Sigmoid colon (tissue), 7 donors: ENCODE measurements at regions of chr16 and their contacts with region 1.

Region 1: DNA sequence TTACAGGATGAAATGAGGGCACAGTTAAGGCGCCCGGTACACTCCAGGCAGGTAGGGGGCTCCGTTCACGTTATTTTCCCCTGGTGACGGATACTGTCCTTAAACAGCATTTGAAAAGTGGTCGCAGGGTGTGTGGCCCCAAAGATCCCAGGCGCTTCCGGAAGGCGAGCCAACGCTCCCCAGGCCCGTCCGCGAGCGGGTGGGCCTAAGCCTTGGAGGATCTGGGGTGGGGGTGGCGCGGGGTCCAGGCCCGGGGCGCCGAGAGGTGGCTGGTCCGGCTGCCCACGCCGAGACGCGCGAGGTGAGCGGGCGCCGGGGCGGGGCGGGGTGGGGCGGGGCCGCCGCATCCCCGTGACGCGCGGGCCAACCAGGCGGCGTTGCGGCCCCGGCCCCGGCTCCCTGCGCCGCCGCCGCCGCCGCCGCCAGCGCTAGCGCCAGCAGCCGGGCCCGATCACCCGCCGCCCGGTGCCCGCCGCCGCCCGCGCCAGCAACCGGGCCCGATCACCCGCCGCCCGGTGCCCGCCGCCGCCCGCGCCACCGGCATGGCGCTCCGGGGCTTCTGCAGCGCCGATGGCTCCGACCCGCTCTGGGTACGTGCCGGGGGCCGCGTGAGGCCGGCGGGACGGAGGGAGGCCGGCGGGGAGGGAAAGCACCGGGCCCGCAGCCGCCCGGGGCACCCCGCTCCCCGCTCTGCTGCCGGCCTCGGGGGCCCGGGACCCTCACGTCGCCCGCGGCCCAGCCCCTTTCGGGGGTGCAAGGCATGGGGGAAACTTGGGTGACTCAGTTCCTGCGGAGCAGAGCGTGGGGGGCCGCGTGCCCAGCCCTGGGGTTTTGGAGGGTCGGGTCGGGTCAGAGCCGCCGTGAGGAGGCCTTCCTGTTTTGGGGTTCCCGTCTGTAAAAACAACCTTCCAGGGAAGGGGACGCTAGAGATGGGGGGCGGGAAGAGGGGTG is at the start of gene ABCC1:
- DNase-seq: no peak
- H3K4me3 ChIP-seq: peak within 1 kb of the TSS; percentile 84 to 97 (median 92)
- H3K27ac ChIP-seq: peak within 1 kb of the TSS; percentile 89 to 94 (median 93)
- H3K4me1 ChIP-seq: peaks cover 0 to 56% (median 50%) of the 10 kb centered on the region in 4 donors
- H3K27me3 ChIP-seq: no peaks in the 10 kb centered on the region
- CTCF ChIP-seq: no peak
- EP300 ChIP-seq: no peak
- POLR2A ChIP-seq: no peak
- total RNA-seq, gene ABCC1: 22.5 to 51.8 (median 32.5) TPM

Region 2: GRCh38 chr16:15829460-15829859 is 120.0 kb before region 1 on chr16:
- intact Hi-C with region 1: no loop called
- DNase-seq: peak; percentile 97
- H3K4me3 ChIP-seq: peak overlapping the region in 3 of 4 donors; percentile 0 to 22 (median 11)
- H3K27ac ChIP-seq: peak overlapping the region; percentile 85 to 98 (median 96)
- H3K4me1 ChIP-seq: peaks cover 0 to 100% (median 88%) of the 10 kb centered on the region in 4 donors
- H3K27me3 ChIP-seq: no peaks in the 10 kb centered on the region
- CTCF ChIP-seq: no peak
- EP300 ChIP-seq: peak in 2 of 4 donors; percentile 53 to 77
- POLR2A ChIP-seq: no peak

Region 3: GRCh38 chr16:15888072-15888976 is 61.2 kb before region 1 on chr16 and contains the start of gene CEP20:
- intact Hi-C with region 1: loop called (anchors 2 kb)
- DNase-seq: peak; percentile 100
- H3K4me3 ChIP-seq: peak within 1 kb of the TSS; percentile 70 to 89 (median 74)
- H3K27ac ChIP-seq: peak within 1 kb of the TSS; percentile 85 to 92 (median 87)
- H3K4me1 ChIP-seq: peaks cover 0 to 39% (median 37%) of the 10 kb centered on the region in 4 donors
- H3K27me3 ChIP-seq: no peaks in the 10 kb centered on the region
- CTCF ChIP-seq: peak in 3 of 4 experiments; percentile 23 to 48 (median 36)
- EP300 ChIP-seq: no peak
- POLR2A ChIP-seq: peak; percentile 33 to 54
- total RNA-seq, gene CEP20: 29.5 to 44.2 (median 34.7) TPM

Region 4: GRCh38 chr16:15919331-15919730 is 30.2 kb before region 1 on chr16:
- intact Hi-C with region 1: no loop called
- DNase-seq: no peak
- H3K4me3 ChIP-seq: no peak overlapping the region
- H3K27ac ChIP-seq: no peak overlapping the region
- H3K4me1 ChIP-seq: no peaks in the 10 kb centered on the region
- H3K27me3 ChIP-seq: no peaks in the 10 kb centered on the region
- CTCF ChIP-seq: no peak
- EP300 ChIP-seq: no peak
- POLR2A ChIP-seq: no peak

Region 5: GRCh38 chr16:16007743-16008111 is 58.2 kb after region 1 on chr16:
- intact Hi-C with region 1: loop called (anchors 5 kb)
- DNase-seq: no peak
- H3K4me3 ChIP-seq: no peak overlapping the region
- H3K27ac ChIP-seq: peak overlapping the region in 3 of 4 donors; percentile 47 to 81 (median 64)
- H3K4me1 ChIP-seq: peaks cover 0 to 26% (median 23%) of the 10 kb centered on the region in 4 donors
- H3K27me3 ChIP-seq: no peaks in the 10 kb centered on the region
- CTCF ChIP-seq: no peak
- EP300 ChIP-seq: no peak
- POLR2A ChIP-seq: no peak

Region 6: DNA sequence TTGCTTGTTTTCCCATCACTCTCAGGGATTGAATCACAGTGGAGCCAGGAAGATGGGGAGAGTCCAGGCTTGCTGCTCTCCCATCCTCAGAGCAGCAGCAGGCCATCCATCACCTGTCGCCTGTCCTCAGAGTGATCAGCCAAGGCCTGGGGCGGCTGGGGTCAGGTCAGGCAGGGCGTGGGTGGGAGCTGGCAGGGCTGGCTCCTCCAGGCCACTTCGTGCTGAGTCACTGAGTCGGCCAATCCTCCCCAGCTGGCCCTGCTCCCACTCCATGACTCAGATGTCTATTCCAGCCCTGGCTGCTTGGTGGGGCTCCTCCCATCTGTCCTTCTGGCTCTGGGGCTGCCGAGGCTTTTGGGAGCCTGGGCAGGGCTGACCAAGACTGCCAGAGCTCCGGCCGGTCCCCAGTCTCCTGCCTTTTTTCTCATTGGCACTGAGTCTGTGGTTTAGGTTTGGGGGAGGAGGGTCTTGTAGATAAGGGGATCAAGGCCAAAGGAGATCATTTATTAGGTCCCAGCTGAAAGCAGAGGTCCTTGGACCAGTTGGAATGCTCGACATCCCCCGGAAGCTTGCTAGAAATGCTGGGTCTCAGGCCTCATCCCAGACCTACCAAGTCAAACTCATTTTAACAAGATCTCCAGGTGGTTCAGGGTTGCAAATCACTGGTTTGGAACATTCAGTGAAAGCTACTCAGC is 72.7 kb after region 1 on chr16:
- intact Hi-C with region 1: loop called (anchors 5 kb)
- DNase-seq: peak; percentile 99
- H3K4me3 ChIP-seq: peak overlapping the region in 2 of 4 donors; percentile 9 to 21
- H3K27ac ChIP-seq: peak overlapping the region; percentile 85 to 91 (median 86)
- H3K4me1 ChIP-seq: peaks cover 3 to 64% (median 41%) of the 10 kb centered on the region in 4 donors
- H3K27me3 ChIP-seq: no peaks in the 10 kb centered on the region
- CTCF ChIP-seq: no peak
- EP300 ChIP-seq: peak in 1 of 4 donors; percentile 24
- POLR2A ChIP-seq: no peak